ENCODE measurements at regions of chr2 and their contacts with region 1.

Region 1: GRCh38 chr2:84888401-84889276 is 7.8 kb upstream of the TRABD2A start:
- DNase-seq: peak in 10 of 14 experiments; percentile 29 to 89 (median 54)
- ATAC-seq: peak; percentile 95
- H3K4me3 ChIP-seq: peak overlapping the region; percentile 29
- H3K4me3 Mint-ChIP-seq: peak overlapping the region; percentile 77
- H3K27ac ChIP-seq: peak overlapping the region; percentile 75 to 76
- H3K27ac Mint-ChIP-seq: peak overlapping the region; percentile 93
- H3K4me1 ChIP-seq: peaks cover 28% of the 10 kb centered on the region
- H3K4me1 Mint-ChIP-seq: peaks cover 46% of the 10 kb centered on the region
- H3K27me3 ChIP-seq: no peaks in the 10 kb centered on the region
- H3K27me3 Mint-ChIP-seq: no peaks in the 10 kb centered on the region
- CTCF ChIP-seq: no peak

Region 2: GRCh38 chr2:84919885-84920580 is 31.4 kb after region 1 on chr2:
- CTCF ChIA-PET with region 1: interaction called, 50 read pairs
- POLR2A ChIA-PET with region 1: interaction called, 46 read pairs
- intact Hi-C with region 1: loop called in 1 of 2 experiments (anchors 2 kb)
- DNase-seq: peak in 4 of 14 experiments; percentile 37 to 60 (median 52)
- ATAC-seq: peak; percentile 63
- H3K4me3 ChIP-seq: no peak overlapping the region
- H3K4me3 Mint-ChIP-seq: peak overlapping the region; percentile 23
- H3K27ac ChIP-seq: peak overlapping the region; percentile 54 to 61
- H3K27ac Mint-ChIP-seq: peak overlapping the region; percentile 81
- H3K4me1 ChIP-seq: peaks cover 40% of the 10 kb centered on the region
- H3K4me1 Mint-ChIP-seq: peaks cover 43% of the 10 kb centered on the region
- H3K27me3 ChIP-seq: no peaks in the 10 kb centered on the region
- H3K27me3 Mint-ChIP-seq: no peaks in the 10 kb centered on the region
- CTCF ChIP-seq: no peak

Region 3: GRCh38 chr2:84939426-84940087 is 50.9 kb after region 1 on chr2:
- CTCF ChIA-PET with region 1: no interaction called
- POLR2A ChIA-PET with region 1: interaction called, 15 read pairs
- intact Hi-C with region 1: no loop called
- DNase-seq: peak; percentile 29 to 92 (median 54)
- ATAC-seq: peak; percentile 85
- H3K4me3 ChIP-seq: peak overlapping the region; percentile 33
- H3K4me3 Mint-ChIP-seq: peak overlapping the region; percentile 66
- H3K27ac ChIP-seq: peak overlapping the region; percentile 64 to 82
- H3K27ac Mint-ChIP-seq: peak overlapping the region; percentile 89
- H3K4me1 ChIP-seq: peaks cover 29% of the 10 kb centered on the region
- H3K4me1 Mint-ChIP-seq: peaks cover 35% of the 10 kb centered on the region
- H3K27me3 ChIP-seq: no peaks in the 10 kb centered on the region
- H3K27me3 Mint-ChIP-seq: no peaks in the 10 kb centered on the region
- CTCF ChIP-seq: no peak

Measured in CD4-positive, alpha-beta T cell (primary cell).